Right cardiac atrium (tissue), 5 donors: ENCODE measurements at regions of chr19 and their contacts with region 1.

Region 1: GRCh38 chr19:21698215-21698614 is 69.2 kb downstream of the ZNF100 start:
- DNase-seq: no peak
- ATAC-seq: peak in 1 of 2 donors; percentile 33
- H3K4me3 ChIP-seq: no peak overlapping the region
- H3K27ac ChIP-seq: no peak overlapping the region
- H3K4me1 ChIP-seq: no peaks in the 10 kb centered on the region
- H3K27me3 ChIP-seq: no peaks in the 10 kb centered on the region

Region 2: DNA sequence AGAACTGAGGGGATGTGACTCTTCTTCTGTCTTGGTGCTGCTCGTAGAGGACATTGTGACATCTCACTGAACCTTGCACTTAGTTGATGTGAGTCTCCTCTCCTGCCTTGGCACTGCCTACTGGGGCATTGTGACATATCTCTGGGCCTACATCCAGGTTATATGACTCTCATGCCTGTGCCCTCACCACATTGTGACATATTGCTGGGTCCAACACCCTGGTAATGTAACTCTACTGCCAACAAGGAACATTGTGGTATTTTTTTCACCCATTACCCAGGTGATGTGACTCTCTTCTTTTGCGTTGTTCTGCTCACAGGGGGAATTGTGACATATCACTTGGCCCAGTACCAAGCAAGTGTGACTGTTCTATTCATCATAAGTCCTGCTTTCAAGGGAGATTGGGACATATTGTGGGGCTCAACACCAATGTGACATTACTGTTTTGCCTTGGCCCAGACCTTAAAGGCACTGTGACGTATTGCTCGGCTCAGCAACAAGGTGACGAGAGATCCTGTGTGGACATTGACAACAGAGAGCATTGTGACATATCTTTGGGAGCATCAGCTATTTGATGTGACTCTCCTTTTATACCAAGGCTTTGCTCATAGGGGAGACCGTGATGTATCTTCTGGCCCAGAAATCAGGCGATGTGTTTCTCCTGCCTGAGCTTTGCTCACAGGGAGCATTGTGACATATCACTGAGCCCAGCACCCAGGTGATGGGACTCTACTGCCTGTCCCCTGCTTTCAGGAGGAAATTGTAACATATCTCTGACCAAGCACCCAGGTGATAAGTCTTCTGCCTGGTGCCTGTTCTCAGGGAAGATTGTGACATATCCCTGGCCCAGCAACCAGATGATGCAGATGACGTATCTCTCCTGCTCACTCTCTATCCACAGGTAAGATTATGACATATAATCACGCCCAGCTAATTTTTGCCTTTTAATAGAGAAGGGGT is 205.0 kb before region 1 on chr19:
- intact Hi-C with region 1: loop called in 2 of 4 experiments (anchors 10 kb)
- DNase-seq: no peak
- ATAC-seq: no peak
- H3K4me3 ChIP-seq: no peak overlapping the region
- H3K27ac ChIP-seq: no peak overlapping the region
- H3K4me1 ChIP-seq: no peaks in the 10 kb centered on the region
- H3K27me3 ChIP-seq: no peaks in the 10 kb centered on the region

Region 3: DNA sequence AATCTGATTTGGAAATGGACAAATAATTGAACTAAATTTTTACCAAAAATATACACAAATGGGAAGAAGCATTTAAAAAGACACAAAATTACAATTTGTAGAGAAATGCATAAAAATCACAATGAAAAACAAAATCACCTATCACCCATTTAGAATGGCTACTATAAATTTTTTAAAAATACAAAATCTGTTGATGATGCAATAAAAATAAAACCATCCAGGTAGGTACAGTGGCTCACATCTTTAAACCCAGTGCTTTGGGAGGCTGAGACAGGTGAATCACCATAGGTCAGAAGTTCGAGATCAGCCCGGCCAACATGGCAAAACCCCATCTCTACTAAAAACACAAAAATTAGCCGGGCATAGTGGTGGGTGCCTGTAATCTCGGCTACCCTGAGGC is 114.2 kb after region 1 on chr19:
- intact Hi-C with region 1: no loop called
- DNase-seq: no peak
- ATAC-seq: no peak
- H3K4me3 ChIP-seq: no peak overlapping the region
- H3K27ac ChIP-seq: no peak overlapping the region
- H3K4me1 ChIP-seq: no peaks in the 10 kb centered on the region
- H3K27me3 ChIP-seq: no peaks in the 10 kb centered on the region